Activated CD4-positive, alpha-beta memory T cell treated with anti-CD3 and anti-CD28 coated beads for 36 hours (primary cell): ENCODE measurements at regions of chr2 and their contacts with region 1.

Region 1: DNA sequence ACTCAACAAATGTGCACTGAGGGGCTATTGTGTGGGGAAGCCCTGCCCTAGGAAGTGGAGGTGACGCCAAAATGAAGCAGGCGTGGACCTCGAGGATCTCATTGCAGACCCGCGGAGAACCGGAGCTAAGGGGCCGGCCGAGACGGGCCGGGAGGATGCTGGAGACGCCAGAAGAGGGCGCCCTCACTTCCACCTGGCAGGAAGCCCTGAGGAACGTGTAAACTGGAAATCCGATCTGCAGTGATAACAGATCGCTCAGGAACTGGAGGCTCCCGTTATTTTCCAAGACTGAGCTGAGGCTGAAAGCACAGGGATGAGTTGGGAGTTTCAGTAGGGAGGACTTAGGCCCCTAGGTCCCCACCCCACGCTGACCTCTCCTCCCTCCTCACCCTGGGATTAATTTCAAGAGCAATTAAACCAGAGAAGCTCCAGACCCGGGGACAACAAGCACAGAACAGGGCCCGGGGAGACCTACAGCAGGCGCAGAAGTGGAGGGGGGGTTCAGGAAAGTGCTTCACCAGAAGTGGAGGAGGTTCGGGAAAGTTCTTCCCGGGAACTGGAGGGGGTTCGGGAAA is 7.7 kb upstream of the COL6A3 start:
- DNase-seq: peak; percentile 86
- H3K4me3 Mint-ChIP-seq: peak overlapping the region; percentile 38
- H3K27ac Mint-ChIP-seq: peak overlapping the region; percentile 50
- H3K4me1 Mint-ChIP-seq: peaks cover 20% of the 10 kb centered on the region
- H3K27me3 Mint-ChIP-seq: no peaks in the 10 kb centered on the region

Region 2: GRCh38 chr2:237165405-237166276 is 256.0 kb before region 1 on chr2:
- CTCF ChIA-PET with region 1: interaction called, 10 read pairs
- POLR2A ChIA-PET with region 1: no interaction called
- intact Hi-C with region 1: no loop called
- DNase-seq: no peak
- H3K4me3 Mint-ChIP-seq: no peak overlapping the region
- H3K27ac Mint-ChIP-seq: no peak overlapping the region
- H3K4me1 Mint-ChIP-seq: no peaks in the 10 kb centered on the region
- H3K27me3 Mint-ChIP-seq: peaks cover 5% of the 10 kb centered on the region

Region 3: GRCh38 chr2:237441605-237442274 is 20.1 kb after region 1 on chr2:
- CTCF ChIA-PET with region 1: interaction called, 62 read pairs
- POLR2A ChIA-PET with region 1: interaction called, 90 read pairs
- intact Hi-C with region 1: loop called (anchors 2 kb)
- DNase-seq: peak; percentile 69
- H3K4me3 Mint-ChIP-seq: peak overlapping the region; percentile 40
- H3K27ac Mint-ChIP-seq: peak overlapping the region; percentile 98
- H3K4me1 Mint-ChIP-seq: peaks cover 73% of the 10 kb centered on the region
- H3K27me3 Mint-ChIP-seq: peaks cover 2% of the 10 kb centered on the region

Region 4: GRCh38 chr2:237459741-237460174 is 38.1 kb after region 1 on chr2:
- CTCF ChIA-PET with region 1: interaction called, 12 read pairs
- POLR2A ChIA-PET with region 1: no interaction called
- intact Hi-C with region 1: no loop called
- DNase-seq: no peak
- H3K4me3 Mint-ChIP-seq: no peak overlapping the region
- H3K27ac Mint-ChIP-seq: no peak overlapping the region
- H3K4me1 Mint-ChIP-seq: peaks cover 12% of the 10 kb centered on the region
- H3K27me3 Mint-ChIP-seq: no peaks in the 10 kb centered on the region

Region 5: GRCh38 chr2:237483040-237483721 is 61.6 kb after region 1 on chr2:
- CTCF ChIA-PET with region 1: interaction called, 12 read pairs
- POLR2A ChIA-PET with region 1: no interaction called
- intact Hi-C with region 1: no loop called
- DNase-seq: no peak
- H3K4me3 Mint-ChIP-seq: no peak overlapping the region
- H3K27ac Mint-ChIP-seq: no peak overlapping the region
- H3K4me1 Mint-ChIP-seq: no peaks in the 10 kb centered on the region
- H3K27me3 Mint-ChIP-seq: peaks cover 36% of the 10 kb centered on the region